Thyroid gland (tissue), 4 donors: ENCODE measurements at regions of chr1 and their contacts with region 1.

Region 1: GRCh38 chr1:205977402-205978014 is 25.7 kb downstream of the RAB7B start:
- DNase-seq: peak; percentile 62 to 80
- H3K4me3 ChIP-seq: no peak overlapping the region
- H3K27ac ChIP-seq: peak overlapping the region in 1 of 3 donors; percentile 41
- H3K4me1 ChIP-seq: peaks cover 0 to 21% of the 10 kb centered on the region in 2 donors
- H3K27me3 ChIP-seq: no peaks in the 10 kb centered on the region
- CTCF ChIP-seq: peak; percentile 71 to 99 (median 96)
- POLR2A ChIP-seq: no peak

Region 2: GRCh38 chr1:205658943-205659581 is 318.4 kb before region 1 on chr1:
- intact Hi-C with region 1: loop called (anchors 5 kb)
- DNase-seq: peak; percentile 83 to 87
- H3K4me3 ChIP-seq: no peak overlapping the region
- H3K27ac ChIP-seq: no peak overlapping the region
- H3K4me1 ChIP-seq: peaks cover 4 to 6% of the 10 kb centered on the region in 2 donors
- H3K27me3 ChIP-seq: no peaks in the 10 kb centered on the region
- CTCF ChIP-seq: peak; percentile 47 to 96 (median 88)
- POLR2A ChIP-seq: no peak

Region 3: DNA sequence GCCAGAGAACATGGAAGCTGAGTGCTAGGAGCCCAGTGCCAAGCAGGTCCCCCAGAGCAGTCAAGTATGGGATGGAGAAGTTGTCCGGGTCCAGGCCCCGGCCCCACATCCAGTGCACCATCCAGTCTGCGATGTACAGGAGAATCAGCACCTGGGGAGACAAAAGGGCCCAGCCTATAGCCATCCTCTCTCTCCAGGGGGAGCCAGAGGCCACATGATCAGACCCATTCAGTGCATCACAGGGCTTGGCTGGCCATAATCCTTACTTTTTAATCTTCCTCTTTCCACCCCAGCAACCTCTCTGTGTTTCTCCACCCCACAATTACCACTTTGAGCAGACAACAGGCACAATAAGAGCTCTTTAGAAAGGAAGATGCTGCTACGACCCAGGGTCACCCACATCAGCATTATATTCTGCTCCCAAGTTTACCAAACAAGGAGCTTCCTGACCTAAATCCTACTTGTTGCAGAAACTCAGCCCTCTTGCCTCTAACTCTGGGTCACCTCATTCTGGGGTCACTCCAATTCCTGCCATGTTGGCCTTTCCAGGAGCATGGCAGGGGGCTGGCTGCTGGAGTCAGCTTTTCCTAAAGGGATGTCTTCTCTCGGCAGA is 185.8 kb before region 1 on chr1:
- intact Hi-C with region 1: loop called (anchors 5 kb)
- DNase-seq: peak; percentile 67 to 74
- H3K4me3 ChIP-seq: no peak overlapping the region
- H3K27ac ChIP-seq: no peak overlapping the region
- H3K4me1 ChIP-seq: no peaks in the 10 kb centered on the region
- H3K27me3 ChIP-seq: no peaks in the 10 kb centered on the region
- CTCF ChIP-seq: peak; percentile 16 to 77 (median 66)
- POLR2A ChIP-seq: no peak

Region 4: GRCh38 chr1:205878026-205878425 is 99.5 kb before region 1 on chr1:
- intact Hi-C with region 1: no loop called
- DNase-seq: no peak
- H3K4me3 ChIP-seq: no peak overlapping the region
- H3K27ac ChIP-seq: no peak overlapping the region
- H3K4me1 ChIP-seq: no peaks in the 10 kb centered on the region
- H3K27me3 ChIP-seq: no peaks in the 10 kb centered on the region
- CTCF ChIP-seq: no peak
- POLR2A ChIP-seq: no peak

Region 5: GRCh38 chr1:205919026-205919746 is 58.3 kb before region 1 on chr1:
- intact Hi-C with region 1: loop called (anchors 2 kb)
- DNase-seq: peak; percentile 87 to 91
- H3K4me3 ChIP-seq: no peak overlapping the region
- H3K27ac ChIP-seq: peak overlapping the region; percentile 41 to 89 (median 83)
- H3K4me1 ChIP-seq: peaks cover 44 to 55% of the 10 kb centered on the region in 2 donors
- H3K27me3 ChIP-seq: no peaks in the 10 kb centered on the region
- CTCF ChIP-seq: peak; percentile 80 to 99 (median 94)
- POLR2A ChIP-seq: peak in 1 of 2 donors; percentile 8